ENCODE measurements at regions of chrX and their contacts with region 1.

Region 1: DNA sequence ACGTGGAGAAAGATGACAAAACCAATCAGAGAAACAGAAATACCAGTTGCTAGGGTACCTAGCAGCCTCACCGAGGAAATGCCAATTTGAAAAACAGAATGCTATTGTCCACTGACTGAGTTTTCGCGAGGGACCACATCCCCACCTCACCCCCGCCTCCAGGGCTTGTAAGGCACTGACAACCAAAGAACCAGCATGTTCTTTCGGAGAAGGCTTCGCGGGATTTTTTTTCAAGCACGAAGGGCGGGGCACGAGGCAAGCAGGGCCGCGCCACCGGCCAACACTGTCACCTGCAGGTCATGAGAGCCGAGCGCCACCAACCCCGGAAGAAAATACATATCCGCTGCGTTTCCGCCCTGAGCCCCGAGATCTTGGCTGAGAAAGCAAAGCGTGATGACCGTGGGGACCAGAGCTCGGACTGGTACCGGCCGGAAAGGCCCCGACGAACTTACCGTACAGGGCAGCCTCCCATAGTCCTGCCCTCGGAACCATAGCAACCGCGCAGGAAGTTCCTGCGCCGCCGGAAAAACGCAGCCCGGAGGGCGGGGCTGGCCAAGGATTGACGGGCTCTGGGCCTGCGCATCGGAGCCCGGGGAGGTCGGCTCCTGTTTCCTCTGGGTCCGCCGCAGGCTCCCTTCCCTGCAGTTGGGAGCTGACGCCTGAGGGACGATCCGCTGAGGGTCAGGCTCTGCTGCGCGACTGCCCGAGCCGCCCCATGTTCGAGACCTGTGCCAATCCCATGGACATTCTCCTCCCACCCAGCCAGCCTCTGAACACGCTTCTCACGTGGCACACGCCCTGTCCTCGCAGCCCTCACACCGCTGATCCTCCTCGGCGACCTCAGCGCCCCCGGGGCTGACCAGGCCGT is 59.2 kb upstream of the PAGE5 start:
- DNase-seq: peak; percentile 77 to 92 (median 89)
- ATAC-seq: peak; percentile 95
- H3K4me3 ChIP-seq: peak overlapping the region; percentile 83
- H3K4me3 Mint-ChIP-seq: peak overlapping the region; percentile 85 to 98 (median 93)
- H3K27ac ChIP-seq: peak overlapping the region; percentile 95
- H3K27ac Mint-ChIP-seq: peak overlapping the region; percentile 91 to 99 (median 98)
- H3K4me1 ChIP-seq: peaks cover 0 to 3% of the 10 kb centered on the region in 2 donors
- H3K4me1 Mint-ChIP-seq: peaks cover 3 to 13% (median 10%) of the 10 kb centered on the region in 7 donors
- H3K27me3 ChIP-seq: no peaks in the 10 kb centered on the region
- H3K27me3 Mint-ChIP-seq: peaks cover 0 to 9% (median 0%) of the 10 kb centered on the region in 5 donors

Region 2: DNA sequence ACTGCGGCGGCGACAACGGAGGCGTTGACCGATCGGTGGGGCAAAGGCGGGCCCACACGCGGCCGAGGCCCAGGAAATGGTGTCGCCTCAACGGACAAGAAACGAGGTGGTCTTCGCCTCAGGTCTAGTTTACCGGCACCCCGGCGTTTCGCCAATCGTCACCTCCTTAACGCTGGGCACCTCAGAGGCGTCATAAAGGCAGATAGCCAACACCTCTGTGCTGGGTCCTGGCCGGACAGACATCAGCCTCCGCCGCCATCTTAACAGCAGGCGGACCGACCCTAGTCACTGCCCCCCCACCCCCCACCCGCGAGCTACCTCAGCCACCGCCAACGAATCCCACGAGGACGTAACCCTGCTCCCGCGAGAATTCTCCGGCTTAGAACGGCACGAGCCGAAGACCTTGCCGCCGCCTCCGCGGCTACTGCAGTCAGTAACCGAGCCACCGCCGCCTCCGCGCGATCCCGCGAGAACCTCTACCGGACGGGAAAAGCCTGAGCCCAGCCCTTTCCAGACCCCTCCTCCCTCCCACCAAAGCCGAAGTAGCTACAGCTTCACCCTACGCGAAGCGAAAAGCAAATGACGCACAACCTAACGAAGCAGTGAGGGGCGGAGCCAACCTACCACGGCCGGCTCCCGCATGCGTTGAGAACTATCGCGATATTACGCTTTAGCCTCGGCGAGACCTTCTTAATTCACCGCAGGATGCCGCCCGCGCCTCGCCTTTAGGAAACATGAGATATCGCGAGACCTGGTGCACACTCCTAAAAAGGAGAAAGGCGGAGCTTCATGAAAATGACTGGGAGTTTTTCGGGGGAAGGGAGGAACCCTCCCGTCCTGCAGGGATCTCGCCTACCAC is 1477.1 kb before region 1 on chrX:
- CTCF ChIA-PET with region 1: no interaction called
- POLR2A ChIA-PET with region 1: no interaction called
- intact Hi-C with region 1: loop called in 1 of 2 experiments (anchors 2 kb)
- DNase-seq: peak; percentile 65 to 96 (median 92)
- ATAC-seq: peak; percentile 88
- H3K4me3 ChIP-seq: peak overlapping the region; percentile 71
- H3K4me3 Mint-ChIP-seq: peak overlapping the region; percentile 88 to 97 (median 93)
- H3K27ac ChIP-seq: peak overlapping the region; percentile 95
- H3K27ac Mint-ChIP-seq: peak overlapping the region; percentile 93 to 98 (median 96)
- H3K4me1 ChIP-seq: peaks cover 5 to 12% of the 10 kb centered on the region in 2 donors
- H3K4me1 Mint-ChIP-seq: peaks cover 9 to 51% (median 35%) of the 10 kb centered on the region in 7 donors
- H3K27me3 ChIP-seq: no peaks in the 10 kb centered on the region
- H3K27me3 Mint-ChIP-seq: no peaks in the 10 kb centered on the region

Region 3: DNA sequence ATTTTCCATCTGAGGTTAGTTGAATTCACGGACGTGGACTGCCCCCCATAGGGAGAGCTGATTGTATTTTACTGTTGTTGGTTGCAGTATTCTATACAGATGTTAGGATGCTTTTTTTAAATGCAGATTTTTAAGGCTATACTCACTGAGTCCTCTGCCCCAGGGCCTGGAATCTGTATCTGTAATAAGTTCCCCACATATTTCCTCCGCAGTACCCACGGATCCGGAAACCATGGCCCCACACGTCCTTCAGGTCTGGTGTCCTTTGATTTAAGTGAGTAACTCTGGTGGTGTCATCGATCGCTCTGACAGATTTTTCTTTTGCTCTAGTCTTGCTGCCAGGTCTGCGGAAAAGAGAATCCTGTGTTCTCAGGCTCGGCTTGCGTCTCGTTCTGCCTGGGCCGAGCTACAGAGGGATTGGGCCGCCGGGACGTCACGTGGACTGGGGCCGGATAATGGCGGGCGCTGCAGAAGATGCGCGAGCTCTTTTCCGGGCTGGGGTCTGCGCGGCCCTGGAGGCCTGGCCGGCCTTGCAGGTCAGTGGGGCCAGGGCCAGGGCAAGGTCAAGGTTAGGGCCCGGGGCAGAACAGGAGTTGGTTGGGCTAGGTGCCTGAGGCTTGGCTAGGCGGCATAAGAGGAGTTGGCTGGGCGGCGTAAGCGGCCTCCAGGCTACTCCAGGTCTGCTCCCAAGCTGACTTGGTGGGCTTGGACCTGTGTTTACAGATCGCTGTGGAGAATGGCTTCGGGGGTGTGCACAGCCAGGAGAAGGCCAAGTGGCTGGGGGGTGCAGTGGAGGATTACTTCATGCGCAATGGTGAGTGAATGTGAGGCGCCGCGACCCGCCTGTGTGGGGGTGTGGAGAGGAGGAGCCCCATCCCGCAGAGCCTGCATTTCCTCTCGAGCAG is 720.7 kb before region 1 on chrX and contains the start of gene TSR2:
- CTCF ChIA-PET with region 1: no interaction called
- POLR2A ChIA-PET with region 1: no interaction called
- intact Hi-C with region 1: loop called (anchors 1 to 2 kb)
- DNase-seq: peak; percentile 50 to 80 (median 74)
- ATAC-seq: peak; percentile 99
- H3K4me3 ChIP-seq: peak within 1 kb of the TSS; percentile 94
- H3K4me3 Mint-ChIP-seq: peak within 1 kb of the TSS; percentile 84 to 100 (median 92)
- H3K27ac ChIP-seq: peak within 1 kb of the TSS; percentile 81
- H3K27ac Mint-ChIP-seq: peak within 1 kb of the TSS; percentile 73 to 94 (median 86)
- H3K4me1 ChIP-seq: peaks cover 8 to 12% of the 10 kb centered on the region in 2 donors
- H3K4me1 Mint-ChIP-seq: peaks cover 15 to 39% (median 26%) of the 10 kb centered on the region in 7 donors
- H3K27me3 ChIP-seq: no peaks in the 10 kb centered on the region
- H3K27me3 Mint-ChIP-seq: no peaks in the 10 kb centered on the region
- total RNA-seq, gene TSR2: 33.6 to 43.3 (median 40.5) TPM

Region 4: GRCh38 chrX:54808605-54809483 is 352.1 kb before region 1 on chrX:
- CTCF ChIA-PET with region 1: no interaction called
- POLR2A ChIA-PET with region 1: no interaction called
- intact Hi-C with region 1: loop called (anchors 1 to 2 kb)
- DNase-seq: peak; percentile 63 to 90 (median 84)
- ATAC-seq: peak; percentile 84
- H3K4me3 ChIP-seq: peak overlapping the region; percentile 93
- H3K4me3 Mint-ChIP-seq: peak overlapping the region; percentile 90 to 99 (median 96)
- H3K27ac ChIP-seq: peak overlapping the region; percentile 89
- H3K27ac Mint-ChIP-seq: peak overlapping the region; percentile 93 to 98 (median 96)
- H3K4me1 ChIP-seq: no peaks in the 10 kb centered on the region
- H3K4me1 Mint-ChIP-seq: peaks cover 5 to 28% (median 19%) of the 10 kb centered on the region in 7 donors
- H3K27me3 ChIP-seq: no peaks in the 10 kb centered on the region
- H3K27me3 Mint-ChIP-seq: peaks cover 0 to 25% (median 0%) of the 10 kb centered on the region in 5 donors

Region 5: GRCh38 chrX:55057675-55058249 is 103.2 kb before region 1 on chrX:
- CTCF ChIA-PET with region 1: no interaction called
- POLR2A ChIA-PET with region 1: no interaction called
- intact Hi-C with region 1: loop called (anchors 1 kb)
- DNase-seq: peak in 6 of 9 donors; percentile 11 to 46 (median 32)
- ATAC-seq: peak; percentile 84
- H3K4me3 ChIP-seq: peak overlapping the region; percentile 35
- H3K4me3 Mint-ChIP-seq: peak overlapping the region; percentile 12 to 87 (median 76)
- H3K27ac ChIP-seq: no peak overlapping the region
- H3K27ac Mint-ChIP-seq: peak overlapping the region in 7 of 9 donors; percentile 43 to 95 (median 90)
- H3K4me1 ChIP-seq: peaks cover 8 to 16% of the 10 kb centered on the region in 2 donors
- H3K4me1 Mint-ChIP-seq: peaks cover 8 to 29% (median 21%) of the 10 kb centered on the region in 7 donors
- H3K27me3 ChIP-seq: no peaks in the 10 kb centered on the region
- H3K27me3 Mint-ChIP-seq: peaks cover 0 to 5% (median 0%) of the 10 kb centered on the region in 5 donors

Region 6: DNA sequence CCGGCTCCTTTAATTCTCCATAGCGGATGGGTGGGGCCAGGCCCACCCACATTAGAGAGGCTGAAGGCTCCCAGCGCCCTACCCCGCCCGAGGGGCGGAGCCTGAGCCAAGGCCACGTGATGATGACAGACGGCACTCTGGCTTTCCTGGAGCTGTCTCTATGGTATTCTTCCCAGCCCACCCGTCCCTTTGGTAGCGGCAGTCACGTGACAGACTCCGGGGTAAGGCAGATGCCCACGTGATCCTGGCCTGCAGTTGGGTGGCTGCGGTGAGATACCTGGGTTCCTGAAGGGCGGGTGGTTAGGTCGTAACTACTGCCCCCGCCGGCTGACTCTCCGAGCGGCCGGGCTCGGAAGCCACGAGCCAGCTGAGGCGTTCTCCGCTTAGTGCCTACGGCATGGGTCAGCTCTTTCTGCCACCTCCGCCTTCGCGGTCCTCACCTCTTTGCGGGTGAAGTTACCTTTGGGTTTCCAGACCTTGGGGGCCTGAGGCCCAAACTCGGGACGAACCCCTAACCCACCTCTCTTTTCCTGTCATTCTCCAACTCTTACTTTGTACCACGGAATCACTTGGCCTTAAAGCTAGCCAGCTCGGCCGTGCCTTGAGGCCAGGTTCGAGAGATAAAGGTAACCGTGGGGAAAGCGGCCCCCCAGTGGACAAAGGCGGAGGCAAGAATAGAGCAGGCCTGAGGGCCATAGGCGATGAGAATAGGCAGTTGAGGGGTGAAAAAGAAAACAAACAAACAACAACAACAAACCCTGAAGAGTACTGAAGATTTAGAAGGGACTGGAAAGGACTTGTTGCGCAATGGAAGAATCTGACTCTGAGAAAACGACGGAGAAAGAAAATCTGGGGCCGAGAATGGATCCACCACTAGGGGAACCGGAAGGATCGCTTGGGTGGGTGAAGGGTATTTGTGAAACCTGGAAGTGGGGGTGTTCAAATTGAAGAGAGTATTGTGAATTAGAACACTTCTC is 556.9 kb after region 1 on chrX and contains the start of gene RRAGB:
- CTCF ChIA-PET with region 1: no interaction called
- POLR2A ChIA-PET with region 1: interaction called, 4 read pairs
- intact Hi-C with region 1: loop called (anchors 1 kb)
- DNase-seq: peak; percentile 67 to 92 (median 88)
- ATAC-seq: peak; percentile 99
- H3K4me3 ChIP-seq: peak within 1 kb of the TSS; percentile 88
- H3K4me3 Mint-ChIP-seq: peak within 1 kb of the TSS; percentile 78 to 96 (median 88)
- H3K27ac ChIP-seq: peak within 1 kb of the TSS; percentile 86
- H3K27ac Mint-ChIP-seq: peak within 1 kb of the TSS; percentile 82 to 95 (median 90)
- H3K4me1 ChIP-seq: peaks cover 13 to 16% of the 10 kb centered on the region in 2 donors
- H3K4me1 Mint-ChIP-seq: peaks cover 23 to 53% (median 37%) of the 10 kb centered on the region in 7 donors
- H3K27me3 ChIP-seq: no peaks in the 10 kb centered on the region
- H3K27me3 Mint-ChIP-seq: no peaks in the 10 kb centered on the region
- total RNA-seq, gene RRAGB: 11.9 to 15.9 (median 12.9) TPM

Region 7: GRCh38 chrX:56563231-56564161 is 1402.6 kb after region 1 on chrX and contains the start of gene UBQLN2:
- CTCF ChIA-PET with region 1: no interaction called
- POLR2A ChIA-PET with region 1: no interaction called
- intact Hi-C with region 1: loop called (anchors 5 to 10 kb)
- DNase-seq: peak; percentile 57 to 78 (median 74)
- ATAC-seq: peak; percentile 89
- H3K4me3 ChIP-seq: peak within 1 kb of the TSS; percentile 98
- H3K4me3 Mint-ChIP-seq: peak within 1 kb of the TSS; percentile 88 to 98 (median 94)
- H3K27ac ChIP-seq: peak within 1 kb of the TSS; percentile 85
- H3K27ac Mint-ChIP-seq: peak within 1 kb of the TSS; percentile 93 to 100 (median 98)
- H3K4me1 ChIP-seq: peaks cover 4 to 5% of the 10 kb centered on the region in 2 donors
- H3K4me1 Mint-ChIP-seq: peaks cover 5 to 20% (median 15%) of the 10 kb centered on the region in 7 donors
- H3K27me3 ChIP-seq: no peaks in the 10 kb centered on the region
- H3K27me3 Mint-ChIP-seq: no peaks in the 10 kb centered on the region
- total RNA-seq, gene UBQLN2: 48.8 to 76.5 (median 56.8) TPM